Left lung (tissue), 14 donors: ENCODE measurements at regions of chr21 and their contacts with region 1.

Region 1: GRCh38 chr21:36927719-36928117 is 38.8 kb downstream of the HLCS start:
- DNase-seq: peak in 3 of 4 donors; percentile 56 to 87 (median 75)
- ATAC-seq: peak; percentile 94
- H3K4me3 ChIP-seq: no peak overlapping the region
- H3K27ac ChIP-seq: no peak overlapping the region
- H3K4me1 ChIP-seq: no peaks in the 10 kb centered on the region
- H3K27me3 ChIP-seq: no peaks in the 10 kb centered on the region
- CTCF ChIP-seq: peak; percentile 77 to 84

Region 2: DNA sequence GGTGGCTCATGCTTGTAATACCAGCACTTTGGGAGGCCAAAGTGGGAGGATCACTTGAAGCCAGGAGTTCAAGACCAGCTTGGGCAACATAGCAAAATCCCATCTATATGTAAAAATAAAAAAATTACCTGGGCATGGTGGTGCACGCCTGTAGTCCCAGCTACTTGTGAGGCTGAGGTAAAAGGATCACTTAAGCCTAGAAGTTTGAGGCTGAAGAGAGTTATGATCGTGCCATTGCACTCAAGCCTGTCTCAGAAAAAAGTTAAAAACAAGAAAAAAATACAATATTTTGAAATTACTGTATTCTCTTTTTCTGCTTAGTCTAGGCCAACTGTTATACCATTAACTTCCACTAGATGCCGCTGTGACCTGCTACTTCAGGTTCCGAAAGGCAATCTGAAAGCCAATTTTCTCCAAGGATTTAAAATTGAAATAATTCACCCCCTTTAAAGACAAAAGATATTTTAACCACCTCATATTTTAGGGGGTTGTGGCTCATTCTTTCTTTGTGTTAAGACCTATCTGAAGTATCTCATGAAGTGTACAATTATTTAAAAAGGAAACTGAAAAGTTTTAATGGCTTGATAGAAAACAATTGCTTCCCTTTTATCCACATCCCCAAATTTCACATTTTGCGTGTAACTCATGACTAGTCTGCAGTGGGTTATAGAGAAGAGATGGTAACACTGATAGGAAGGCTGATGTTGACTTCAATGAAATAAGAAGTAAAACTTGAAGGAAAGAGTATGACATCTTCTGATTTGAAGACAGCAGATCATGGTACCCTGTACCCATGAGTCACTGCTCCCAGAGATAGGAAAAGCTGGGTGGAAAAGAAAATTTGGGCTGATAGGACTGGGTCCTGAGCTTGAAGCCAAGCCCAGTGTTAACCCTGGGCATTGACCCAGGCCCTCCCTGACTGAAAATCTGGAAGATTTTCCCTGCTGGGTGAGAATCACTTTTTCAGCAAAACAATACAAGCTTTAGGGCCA is 423.4 kb before region 1 on chr21:
- intact Hi-C with region 1: loop called in 1 of 2 experiments (anchors 10 kb)
- DNase-seq: peak in 2 of 4 donors; percentile 60 to 72
- ATAC-seq: peak; percentile 76
- H3K4me3 ChIP-seq: no peak overlapping the region
- H3K27ac ChIP-seq: no peak overlapping the region
- H3K4me1 ChIP-seq: no peaks in the 10 kb centered on the region
- H3K27me3 ChIP-seq: peaks cover 0 to 5% of the 10 kb centered on the region in 2 donors
- CTCF ChIP-seq: peak; percentile 84 to 99

Region 3: GRCh38 chr21:36524477-36524876 is 403.2 kb before region 1 on chr21:
- intact Hi-C with region 1: no loop called
- DNase-seq: no peak
- ATAC-seq: no peak
- H3K4me3 ChIP-seq: no peak overlapping the region
- H3K27ac ChIP-seq: no peak overlapping the region
- H3K4me1 ChIP-seq: no peaks in the 10 kb centered on the region
- H3K27me3 ChIP-seq: peaks cover 0 to 29% of the 10 kb centered on the region in 2 donors
- CTCF ChIP-seq: no peak

Region 4: DNA sequence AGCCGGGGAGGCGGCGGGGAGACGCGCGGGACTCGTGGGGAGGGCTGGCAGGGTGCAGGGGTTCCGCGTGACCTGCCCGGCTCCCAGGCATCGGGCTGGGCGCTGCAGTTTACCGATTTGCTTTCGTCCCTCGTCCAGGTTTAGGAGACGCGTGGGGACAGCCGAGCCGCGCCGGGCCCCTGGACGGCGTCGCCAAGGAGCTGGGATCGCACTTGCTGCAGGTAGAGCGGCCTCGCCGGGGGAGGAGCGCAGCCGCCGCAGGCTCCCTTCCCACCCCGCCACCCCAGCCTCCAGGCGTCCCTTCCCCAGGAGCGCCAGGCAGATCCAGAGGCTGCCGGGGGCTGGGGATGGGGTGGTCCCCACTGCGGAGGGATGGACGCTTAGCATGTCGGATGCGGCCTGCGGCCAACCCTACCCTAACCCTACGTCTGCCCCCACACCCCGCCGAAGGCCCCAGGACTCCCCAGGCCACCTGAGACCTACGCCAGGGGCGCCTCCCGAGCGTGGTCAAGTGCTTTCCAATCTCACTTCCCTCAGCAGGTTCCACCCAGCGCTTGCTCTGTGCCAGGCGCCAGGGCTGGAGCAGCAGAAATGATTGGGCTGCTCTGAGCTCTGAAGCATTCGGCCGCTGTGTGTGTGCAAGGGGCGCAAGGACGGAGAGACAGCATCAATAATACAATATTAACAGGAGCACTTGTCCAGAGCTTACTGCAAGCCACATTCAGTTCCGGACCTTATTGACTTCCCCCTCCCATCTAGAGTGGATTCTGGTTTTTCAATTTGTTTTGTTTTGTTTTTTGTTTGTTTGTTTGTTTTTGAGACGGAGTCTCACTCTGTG is 218.5 kb before region 1 on chr21:
- intact Hi-C with region 1: no loop called
- DNase-seq: no peak
- ATAC-seq: no peak
- H3K4me3 ChIP-seq: no peak overlapping the region
- H3K27ac ChIP-seq: no peak overlapping the region
- H3K4me1 ChIP-seq: peaks cover 0 to 28% of the 10 kb centered on the region in 2 donors
- H3K27me3 ChIP-seq: peaks cover 100% of the 10 kb centered on the region in 2 donors
- CTCF ChIP-seq: no peak

Region 5: GRCh38 chr21:36747815-36748383 is 179.8 kb before region 1 on chr21:
- intact Hi-C with region 1: loop called in 1 of 2 experiments (anchors 10 kb)
- DNase-seq: peak in 2 of 4 donors; percentile 46 to 65
- ATAC-seq: peak; percentile 87
- H3K4me3 ChIP-seq: peak overlapping the region; percentile 15 to 26
- H3K27ac ChIP-seq: no peak overlapping the region
- H3K4me1 ChIP-seq: peaks cover 0 to 15% of the 10 kb centered on the region in 2 donors
- H3K27me3 ChIP-seq: peaks cover 30 to 63% of the 10 kb centered on the region in 2 donors
- CTCF ChIP-seq: no peak